Mammary epithelial cell (primary cell): ENCODE measurements at regions of chr2 and their contacts with region 1.

Region 1: GRCh38 chr2:205814039-205814364 is 131.7 kb downstream of the NRP2 start:
- DNase-seq: peak; percentile 68
- H3K4me3 ChIP-seq: no peak overlapping the region
- H3K27ac ChIP-seq: peak overlapping the region; percentile 44
- H3K4me1 ChIP-seq: peaks cover 12% of the 10 kb centered on the region
- H3K27me3 ChIP-seq: no peaks in the 10 kb centered on the region
- CTCF ChIP-seq: peak in 1 of 2 donors; percentile 24

Region 2: DNA sequence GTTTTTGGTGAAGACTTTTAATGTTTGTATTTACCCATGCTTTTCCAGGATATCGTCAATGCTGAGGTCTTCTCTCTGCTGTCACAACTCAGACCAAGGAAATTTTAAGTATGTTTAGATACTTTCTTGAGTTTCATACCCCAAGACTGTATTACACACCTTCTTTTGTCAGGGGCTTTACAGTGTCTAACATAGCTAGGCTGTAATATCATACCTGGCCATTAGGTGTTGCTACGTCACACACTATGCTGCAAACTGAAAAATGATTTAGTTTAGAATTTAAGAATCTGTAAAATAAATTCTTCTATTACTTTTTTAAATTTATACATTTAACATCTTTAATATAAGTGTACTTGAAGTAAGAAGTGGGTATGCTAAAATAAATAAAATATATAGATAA is 490.1 kb before region 1 on chr2:
- CTCF ChIA-PET with region 1: no interaction called
- dilution Hi-C with region 1: no loop called
- in situ Hi-C with region 1: no loop called
- intact Hi-C with region 1: loop called (anchors 5 kb)
- DNase-seq: peak; percentile 4
- H3K4me3 ChIP-seq: no peak overlapping the region
- H3K27ac ChIP-seq: no peak overlapping the region
- H3K4me1 ChIP-seq: no peaks in the 10 kb centered on the region
- H3K27me3 ChIP-seq: no peaks in the 10 kb centered on the region
- CTCF ChIP-seq: peak; percentile 78 to 87

Region 3: DNA sequence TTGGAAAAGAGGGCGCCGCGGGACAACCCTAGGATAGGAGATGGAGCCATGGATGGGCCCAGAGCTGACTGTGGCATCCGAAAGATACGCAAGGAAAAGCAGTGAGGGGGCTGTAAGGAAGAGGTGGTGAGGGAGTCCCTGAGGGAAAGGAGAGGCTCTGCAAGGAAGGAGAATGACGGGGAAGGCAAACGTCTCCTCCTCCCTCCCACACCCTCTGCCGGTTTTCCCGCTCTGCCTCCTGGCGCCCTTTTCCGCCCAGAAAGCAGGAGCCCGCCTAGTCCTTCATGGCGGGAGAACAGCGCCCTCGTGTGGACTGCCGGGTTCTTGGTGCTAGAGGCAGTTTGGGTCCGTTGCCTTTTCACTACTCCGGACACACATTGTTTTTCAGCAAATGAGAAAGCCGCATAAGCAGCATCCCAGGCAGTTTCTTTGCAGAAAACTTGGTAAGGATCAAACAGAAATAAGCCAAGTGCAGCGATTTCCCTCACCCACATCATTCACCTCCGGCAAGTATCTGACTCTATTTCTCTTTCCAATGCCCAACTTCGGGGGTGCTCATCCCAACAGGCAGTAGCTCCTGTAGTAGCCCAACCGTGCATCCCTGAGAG is 71.6 kb after region 1 on chr2:
- CTCF ChIA-PET with region 1: no interaction called
- dilution Hi-C with region 1: no loop called
- in situ Hi-C with region 1: no loop called
- intact Hi-C with region 1: loop called (anchors 5 kb)
- DNase-seq: peak; percentile 65
- H3K4me3 ChIP-seq: no peak overlapping the region
- H3K27ac ChIP-seq: no peak overlapping the region
- H3K4me1 ChIP-seq: peaks cover 17% of the 10 kb centered on the region
- H3K27me3 ChIP-seq: no peaks in the 10 kb centered on the region
- CTCF ChIP-seq: peak; percentile 63 to 72

Region 4: DNA sequence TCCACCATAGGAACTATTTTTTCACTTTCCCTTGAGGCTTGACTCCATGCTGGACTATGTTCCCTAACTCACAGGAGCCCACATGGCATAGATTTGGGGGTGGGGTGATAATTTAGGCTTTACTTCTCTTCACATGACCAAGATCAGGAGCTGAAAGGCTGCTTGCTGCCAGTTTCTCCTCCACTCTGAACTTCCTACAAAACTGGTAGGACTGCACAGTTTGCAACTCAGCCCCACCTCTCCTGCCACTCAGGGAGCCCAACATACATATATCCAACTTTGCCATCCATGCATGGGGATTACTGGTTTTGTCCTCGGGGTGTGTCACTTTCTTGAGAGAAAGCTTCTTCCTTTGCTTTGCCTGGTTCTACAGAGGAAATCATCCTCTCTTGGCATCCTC is 257.8 kb after region 1 on chr2:
- CTCF ChIA-PET with region 1: no interaction called
- dilution Hi-C with region 1: no loop called
- in situ Hi-C with region 1: no loop called
- intact Hi-C with region 1: no loop called
- DNase-seq: no peak
- H3K4me3 ChIP-seq: no peak overlapping the region
- H3K27ac ChIP-seq: no peak overlapping the region
- H3K4me1 ChIP-seq: no peaks in the 10 kb centered on the region
- H3K27me3 ChIP-seq: no peaks in the 10 kb centered on the region
- CTCF ChIP-seq: no peak